ENCODE measurements at regions of chr20 and their contacts with region 1.

Region 1: GRCh38 chr20:57266291-57267157 is at the start of gene BMP7:
- DNase-seq: no peak
- ATAC-seq: peak; percentile 72
- total RNA-seq, gene BMP7: 17.3 TPM

Region 2: DNA sequence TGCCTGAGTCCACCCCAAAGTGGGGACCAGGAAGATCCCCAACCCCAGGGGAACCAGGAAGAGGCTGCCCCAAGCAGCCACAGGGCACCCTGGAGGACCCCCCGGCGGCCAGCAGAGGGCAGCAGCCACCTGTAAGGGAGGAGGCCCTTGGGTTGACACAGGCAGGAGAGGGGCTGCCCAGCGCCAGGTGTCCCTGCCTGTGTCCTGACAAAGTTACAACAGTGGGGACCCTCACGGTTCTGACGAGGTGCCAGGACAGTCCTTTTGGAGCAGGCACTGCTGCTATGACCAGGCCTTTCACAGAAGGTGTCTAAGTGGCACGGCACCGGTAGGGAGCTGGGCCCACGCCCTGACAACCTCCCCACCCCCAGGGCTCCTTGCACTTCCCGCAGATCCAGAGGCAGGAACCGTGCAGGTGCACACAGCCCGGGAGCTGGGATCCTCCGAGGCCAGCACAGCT is 176.8 kb before region 1 on chr20:
- intact Hi-C with region 1: loop called (anchors 10 kb)
- DNase-seq: peak; percentile 89
- ATAC-seq: peak; percentile 83

Region 3: GRCh38 chr20:57205360-57206245 is 60.9 kb before region 1 on chr20:
- intact Hi-C with region 1: loop called (anchors 10 kb)
- DNase-seq: no peak
- ATAC-seq: peak; percentile 57

Region 4: GRCh38 chr20:57282670-57283361 is 16.3 kb after region 1 on chr20:
- intact Hi-C with region 1: no loop called
- DNase-seq: no peak
- ATAC-seq: peak; percentile 90

Region 5: DNA sequence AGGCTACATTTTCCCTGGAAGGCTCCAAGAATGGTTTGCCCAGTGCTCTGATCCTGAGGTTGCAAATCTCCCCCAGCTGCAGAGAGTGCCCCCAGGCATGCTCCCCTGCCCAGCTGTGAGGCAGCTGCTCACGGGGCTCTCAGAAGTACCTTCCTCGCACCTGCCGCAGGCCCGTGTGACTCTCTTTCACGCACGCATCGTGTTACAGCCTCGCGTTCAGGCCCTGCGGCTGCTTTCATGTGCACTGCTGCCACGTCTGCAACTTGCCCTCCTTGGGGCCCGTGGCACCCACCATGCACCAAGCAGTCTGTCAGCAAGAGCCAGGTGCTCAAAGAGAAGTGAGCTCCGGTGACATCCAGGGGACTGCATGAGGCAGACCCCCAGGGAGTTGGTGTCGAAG is 34.5 kb after region 1 on chr20:
- intact Hi-C with region 1: no loop called
- DNase-seq: no peak
- ATAC-seq: no peak

Region 6: DNA sequence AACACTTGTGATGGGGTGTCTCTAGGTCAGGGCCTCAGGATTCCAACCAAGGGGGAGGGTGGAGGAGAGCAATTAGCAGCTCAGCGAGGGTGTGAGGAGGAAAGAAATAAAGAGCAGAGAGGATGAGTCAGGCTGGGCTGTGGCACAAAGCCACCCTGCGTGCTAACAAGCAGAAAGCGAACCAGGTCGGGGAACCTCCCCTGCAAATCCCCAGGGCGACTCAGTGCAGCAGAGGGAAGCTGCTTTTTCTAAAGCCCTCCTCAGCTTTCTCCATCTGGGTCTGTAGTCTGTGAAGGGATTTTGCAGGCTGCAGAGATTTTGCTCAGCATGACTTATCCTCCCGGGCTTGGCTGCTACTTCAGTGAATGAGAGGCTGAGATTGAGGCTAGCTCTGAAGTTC is 56.5 kb after region 1 on chr20:
- intact Hi-C with region 1: loop called (anchors 10 kb)
- DNase-seq: no peak
- ATAC-seq: peak; percentile 55